Endothelial cell of umbilical vein (primary cell): ENCODE measurements at regions of chr20 and their contacts with region 1.

Region 1: DNA sequence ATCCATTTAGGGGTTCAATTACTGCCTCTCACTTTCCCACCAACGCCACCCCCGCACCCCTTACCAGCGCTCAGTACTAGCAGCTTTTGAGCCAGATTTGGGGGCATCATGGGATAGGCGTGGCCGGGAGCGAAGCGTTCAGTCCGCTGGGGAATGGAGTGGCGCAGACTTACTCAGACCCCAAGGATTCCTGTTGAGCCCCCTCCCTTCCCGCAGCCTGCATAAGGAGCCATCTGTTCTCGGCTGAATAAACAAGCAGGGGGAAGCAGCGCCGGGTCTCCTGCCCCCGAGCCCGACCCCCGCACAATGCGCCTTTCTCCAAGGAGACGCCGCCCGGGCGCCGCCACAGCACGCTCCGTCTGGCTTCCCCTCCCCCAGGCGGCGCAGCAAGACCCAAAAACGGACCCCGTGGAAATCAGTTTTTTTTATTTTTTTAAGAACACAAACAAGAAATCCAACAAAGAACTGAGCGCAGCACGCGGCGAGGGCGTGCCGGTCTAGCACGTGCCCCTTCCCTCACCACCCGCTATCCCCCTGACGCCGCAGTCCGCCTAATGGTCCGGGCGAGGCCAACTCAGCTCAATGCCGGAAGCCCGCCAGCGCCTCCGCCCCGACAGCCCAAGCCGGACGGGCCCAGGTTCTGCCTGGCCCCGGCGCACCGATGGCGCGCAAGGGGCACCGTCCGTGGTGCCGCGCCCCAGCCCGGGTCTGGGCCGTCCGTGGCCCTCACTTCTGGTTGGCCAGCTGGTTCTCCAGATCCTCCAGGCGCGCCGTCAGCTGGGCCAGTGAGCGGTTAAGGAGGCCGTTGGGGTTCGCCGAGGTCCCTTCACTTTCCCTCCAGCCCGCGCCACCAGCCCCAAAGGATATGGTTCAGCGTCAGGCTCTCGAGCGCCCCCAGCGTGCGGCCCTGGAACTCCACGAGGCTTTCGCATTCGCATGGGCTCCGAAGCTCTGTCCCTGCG is 13.3 kb upstream of the RBPJL start:
- DNase-seq: peak; percentile 76
- H3K4me3 ChIP-seq: peak overlapping the region; percentile 33 to 51 (median 47)
- H3K27ac ChIP-seq: peak overlapping the region; percentile 37
- H3K4me1 ChIP-seq: peaks cover 9% of the 10 kb centered on the region
- H3K27me3 ChIP-seq: peaks cover 0 to 8% of the 10 kb centered on the region in 2 experiments
- CTCF ChIP-seq: peak; percentile 95 to 99
- POLR2A ChIP-seq: no peak

Region 2: GRCh38 chr20:44885392-44886265 is 407.7 kb before region 1 on chr20 and contains the start of gene YWHAB:
- CTCF ChIA-PET with region 1: no interaction called
- POLR2A ChIA-PET with region 1: no interaction called
- dilution Hi-C with region 1: no loop called
- intact Hi-C with region 1: loop called (anchors 10 kb)
- DNase-seq: peak; percentile 98
- H3K4me3 ChIP-seq: peak within 1 kb of the TSS; percentile 89 to 98 (median 97)
- H3K27ac ChIP-seq: peak within 1 kb of the TSS; percentile 84
- H3K4me1 ChIP-seq: peaks cover 33% of the 10 kb centered on the region
- H3K27me3 ChIP-seq: no peaks in the 10 kb centered on the region
- CTCF ChIP-seq: no peak
- POLR2A ChIP-seq: peak; percentile 54
- total RNA-seq, gene YWHAB: 255 and 256 TPM in 2 replicates

Region 3: DNA sequence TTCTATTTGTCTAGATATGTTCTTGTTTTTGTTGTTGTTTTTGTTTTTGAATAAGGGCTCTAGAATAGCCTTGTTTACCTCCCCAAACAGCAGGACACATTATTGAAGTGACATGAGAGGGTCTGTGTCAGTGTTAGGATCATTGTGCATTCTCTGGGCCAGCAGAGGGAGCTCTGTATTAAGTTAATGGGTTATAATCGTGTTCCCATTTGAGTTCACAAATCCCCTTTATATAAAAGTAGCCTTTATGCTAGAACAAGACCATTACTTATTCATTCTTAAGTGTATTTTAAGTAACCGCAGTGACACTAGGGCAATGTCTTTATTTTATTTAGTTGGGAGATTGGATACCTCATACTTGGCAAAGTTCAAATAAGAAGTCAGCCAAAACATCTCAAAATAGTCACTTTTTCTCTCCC is 282.2 kb before region 1 on chr20:
- CTCF ChIA-PET with region 1: interaction called, 56 read pairs
- POLR2A ChIA-PET with region 1: no interaction called
- dilution Hi-C with region 1: no loop called
- intact Hi-C with region 1: loop called (anchors 1 kb)
- DNase-seq: peak; percentile 74
- H3K4me3 ChIP-seq: no peak overlapping the region
- H3K27ac ChIP-seq: no peak overlapping the region
- H3K4me1 ChIP-seq: no peaks in the 10 kb centered on the region
- H3K27me3 ChIP-seq: no peaks in the 10 kb centered on the region
- CTCF ChIP-seq: peak; percentile 67 to 68
- POLR2A ChIP-seq: no peak

Region 4: DNA sequence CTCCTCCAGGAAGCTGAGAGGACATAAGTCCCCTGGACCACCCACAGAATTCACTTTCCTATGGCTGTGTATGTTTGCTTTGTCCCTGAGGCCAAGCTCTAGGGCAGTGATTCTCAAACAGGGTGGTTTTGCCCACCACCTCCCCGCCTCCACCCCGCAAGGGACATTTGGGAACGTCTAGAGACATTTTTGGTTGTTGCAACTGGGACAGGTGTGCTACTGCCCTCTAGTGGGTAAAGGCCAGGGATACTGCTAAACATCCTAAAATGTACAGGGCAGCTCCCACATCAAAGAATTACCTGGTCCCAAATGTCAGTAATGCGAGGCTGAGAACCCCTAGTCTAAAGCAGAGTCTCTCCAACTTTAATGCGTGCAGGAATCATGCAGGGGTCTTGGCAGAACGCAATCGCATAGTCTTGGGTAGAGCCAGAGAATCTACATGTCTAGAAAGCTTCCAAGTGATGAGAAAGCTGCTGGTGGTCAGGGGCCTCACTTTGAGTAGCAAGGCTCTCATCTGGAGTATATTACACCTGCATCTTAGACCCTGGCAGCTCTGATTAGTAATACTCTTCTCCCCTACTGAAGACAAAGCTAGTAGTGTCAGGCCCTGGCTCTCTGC is 197.5 kb before region 1 on chr20:
- CTCF ChIA-PET with region 1: interaction called, 132 read pairs
- POLR2A ChIA-PET with region 1: no interaction called
- dilution Hi-C with region 1: no loop called
- intact Hi-C with region 1: loop called (anchors 1 kb)
- DNase-seq: peak; percentile 52
- H3K4me3 ChIP-seq: no peak overlapping the region
- H3K27ac ChIP-seq: no peak overlapping the region
- H3K4me1 ChIP-seq: peaks cover under 1% of the 10 kb centered on the region
- H3K27me3 ChIP-seq: peaks cover 23 to 30% of the 10 kb centered on the region in 2 experiments
- CTCF ChIP-seq: peak; percentile 53 to 79
- POLR2A ChIP-seq: no peak

Region 5: DNA sequence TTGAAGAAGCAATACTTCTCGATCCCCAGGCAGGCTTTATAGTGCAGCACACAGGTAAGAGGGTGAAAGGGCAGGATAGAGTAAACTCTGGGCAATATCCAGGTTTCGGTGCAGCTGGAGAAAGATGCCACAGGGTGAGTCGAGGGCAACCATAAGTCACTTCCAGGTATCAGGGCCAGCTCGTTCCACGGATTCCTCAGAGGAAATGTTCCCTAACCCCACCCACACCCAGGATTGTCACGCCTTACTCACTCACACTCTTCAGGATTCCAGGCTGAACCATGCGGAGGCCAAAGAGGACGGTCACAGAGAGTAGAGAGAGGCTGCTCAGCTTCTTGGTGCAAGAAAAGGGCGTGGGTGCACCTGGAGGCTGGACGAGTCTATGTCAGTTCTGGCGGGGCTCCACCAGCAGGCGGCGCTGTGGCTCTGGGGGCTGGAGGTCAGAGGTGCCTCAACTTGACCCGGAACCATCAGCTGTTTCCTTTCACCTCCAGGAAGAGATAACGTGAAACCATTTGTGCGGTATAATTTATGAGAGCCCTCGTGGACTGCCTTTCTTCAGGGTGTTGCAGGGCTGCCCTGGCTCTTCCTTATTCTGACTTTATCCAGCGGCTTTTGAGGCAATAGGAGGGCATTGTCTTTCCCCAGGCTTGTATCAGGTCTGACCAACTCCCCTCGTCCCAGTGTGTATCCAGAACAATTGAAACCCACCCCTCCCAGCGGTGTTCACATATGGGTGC is 154.6 kb before region 1 on chr20:
- CTCF ChIA-PET with region 1: interaction called, 25 read pairs
- POLR2A ChIA-PET with region 1: no interaction called
- dilution Hi-C with region 1: no loop called
- intact Hi-C with region 1: loop called (anchors 1 kb)
- DNase-seq: peak; percentile 4
- H3K4me3 ChIP-seq: no peak overlapping the region
- H3K27ac ChIP-seq: no peak overlapping the region
- H3K4me1 ChIP-seq: no peaks in the 10 kb centered on the region
- H3K27me3 ChIP-seq: peaks cover 11 to 12% of the 10 kb centered on the region in 2 experiments
- CTCF ChIP-seq: peak; percentile 69 to 70
- POLR2A ChIP-seq: no peak

Region 6: DNA sequence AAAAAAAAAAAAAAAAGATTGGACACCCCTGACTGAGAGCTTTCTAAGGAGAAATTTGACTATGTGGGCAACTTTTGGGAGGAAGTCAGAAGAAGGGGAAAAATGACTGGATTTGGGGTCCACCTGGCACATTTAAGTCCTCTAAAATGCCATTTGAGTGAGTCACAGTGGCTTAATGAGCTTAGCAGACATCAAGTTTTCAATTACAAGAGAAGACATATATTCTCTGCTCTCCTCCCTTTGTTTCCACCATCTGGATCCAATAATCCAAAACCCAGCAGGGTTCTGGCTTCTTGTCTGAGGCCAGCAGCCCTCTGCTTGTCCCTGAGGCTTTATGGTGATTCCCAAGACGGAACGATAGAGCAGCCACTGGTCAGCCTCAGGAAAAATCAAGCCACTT is 111.7 kb before region 1 on chr20:
- CTCF ChIA-PET with region 1: no interaction called
- POLR2A ChIA-PET with region 1: no interaction called
- dilution Hi-C with region 1: no loop called
- intact Hi-C with region 1: no loop called
- DNase-seq: no peak
- H3K4me3 ChIP-seq: no peak overlapping the region
- H3K27ac ChIP-seq: no peak overlapping the region
- H3K4me1 ChIP-seq: no peaks in the 10 kb centered on the region
- H3K27me3 ChIP-seq: peaks cover 0 to 2% of the 10 kb centered on the region in 2 experiments
- CTCF ChIP-seq: no peak
- POLR2A ChIP-seq: no peak

Region 7: DNA sequence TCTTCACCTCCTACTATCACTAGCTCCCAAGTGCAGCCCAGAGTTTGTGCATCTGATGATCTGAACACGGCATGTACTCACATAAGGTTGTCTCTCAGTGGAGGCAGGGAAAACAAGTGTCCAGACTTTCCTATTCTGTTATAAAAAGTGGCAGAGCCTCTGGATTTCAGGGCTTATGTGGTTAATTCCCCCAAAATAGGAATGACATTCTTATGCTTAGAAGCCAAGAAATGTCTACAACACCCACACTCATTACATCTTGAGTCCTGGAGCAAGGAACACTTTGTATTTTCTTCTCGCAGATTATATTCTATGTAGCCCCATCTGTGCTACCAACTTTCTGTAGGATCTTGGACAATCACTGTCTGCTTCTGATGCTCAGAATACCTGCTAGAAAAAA is 100.0 kb before region 1 on chr20:
- CTCF ChIA-PET with region 1: no interaction called
- POLR2A ChIA-PET with region 1: no interaction called
- dilution Hi-C with region 1: no loop called
- intact Hi-C with region 1: no loop called
- DNase-seq: no peak
- H3K4me3 ChIP-seq: no peak overlapping the region
- H3K27ac ChIP-seq: no peak overlapping the region
- H3K4me1 ChIP-seq: no peaks in the 10 kb centered on the region
- H3K27me3 ChIP-seq: peaks cover 2 to 8% of the 10 kb centered on the region in 2 experiments
- CTCF ChIP-seq: no peak
- POLR2A ChIP-seq: no peak

Region 8: GRCh38 chr20:45246109-45246508 is 47.2 kb before region 1 on chr20:
- CTCF ChIA-PET with region 1: no interaction called
- POLR2A ChIA-PET with region 1: no interaction called
- dilution Hi-C with region 1: no loop called
- intact Hi-C with region 1: no loop called
- DNase-seq: no peak
- H3K4me3 ChIP-seq: no peak overlapping the region
- H3K27ac ChIP-seq: no peak overlapping the region
- H3K4me1 ChIP-seq: no peaks in the 10 kb centered on the region
- H3K27me3 ChIP-seq: peaks cover 11 to 21% of the 10 kb centered on the region in 2 experiments
- CTCF ChIP-seq: no peak
- POLR2A ChIP-seq: no peak

Region 9: DNA sequence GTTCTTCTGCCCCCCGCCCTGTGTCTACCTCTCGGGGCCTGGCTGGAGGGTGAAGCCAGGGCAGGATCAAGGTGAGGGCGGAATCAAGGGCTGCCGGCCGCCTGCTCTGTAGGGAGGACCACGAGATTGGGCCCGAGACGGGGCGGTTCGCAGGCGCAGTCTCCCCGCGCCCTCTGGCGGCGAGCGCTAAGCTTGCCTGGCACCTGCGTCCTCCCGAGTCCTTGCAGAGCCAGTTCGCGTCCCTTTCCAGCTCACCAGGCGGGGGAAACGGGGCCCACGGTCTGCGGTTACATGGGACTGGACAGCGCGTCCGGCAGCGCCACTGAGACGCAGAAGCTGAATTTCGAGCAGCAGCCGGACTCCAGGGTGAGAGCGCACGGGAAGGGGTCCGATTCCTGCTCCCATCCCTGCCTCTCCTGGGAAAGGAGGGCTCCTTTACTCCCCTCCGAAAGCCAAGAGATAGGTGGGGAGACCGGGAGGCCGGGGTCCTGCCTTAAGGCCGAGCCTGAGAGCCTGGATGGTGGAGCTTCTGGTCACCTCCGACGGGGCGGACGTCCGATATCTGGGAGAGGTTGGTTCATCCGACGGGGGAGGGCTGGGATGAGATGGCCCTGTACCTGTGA is 18.4 kb after region 1 on chr20:
- CTCF ChIA-PET with region 1: interaction called, 57 read pairs
- POLR2A ChIA-PET with region 1: no interaction called
- dilution Hi-C with region 1: no loop called
- intact Hi-C with region 1: no loop called
- DNase-seq: peak; percentile 37
- H3K4me3 ChIP-seq: no peak overlapping the region
- H3K27ac ChIP-seq: no peak overlapping the region
- H3K4me1 ChIP-seq: no peaks in the 10 kb centered on the region
- H3K27me3 ChIP-seq: peaks cover 18 to 21% of the 10 kb centered on the region in 2 experiments
- CTCF ChIP-seq: peak; percentile 84 to 97
- POLR2A ChIP-seq: no peak

Region 10: GRCh38 chr20:45450097-45450818 is 156.9 kb after region 1 on chr20:
- CTCF ChIA-PET with region 1: interaction called, 11 read pairs
- POLR2A ChIA-PET with region 1: no interaction called
- dilution Hi-C with region 1: no loop called
- intact Hi-C with region 1: no loop called
- DNase-seq: peak; percentile 54
- H3K4me3 ChIP-seq: no peak overlapping the region
- H3K27ac ChIP-seq: no peak overlapping the region
- H3K4me1 ChIP-seq: no peaks in the 10 kb centered on the region
- H3K27me3 ChIP-seq: peaks cover 0 to 3% of the 10 kb centered on the region in 2 experiments
- CTCF ChIP-seq: peak; percentile 48 to 56
- POLR2A ChIP-seq: no peak

Region 11: DNA sequence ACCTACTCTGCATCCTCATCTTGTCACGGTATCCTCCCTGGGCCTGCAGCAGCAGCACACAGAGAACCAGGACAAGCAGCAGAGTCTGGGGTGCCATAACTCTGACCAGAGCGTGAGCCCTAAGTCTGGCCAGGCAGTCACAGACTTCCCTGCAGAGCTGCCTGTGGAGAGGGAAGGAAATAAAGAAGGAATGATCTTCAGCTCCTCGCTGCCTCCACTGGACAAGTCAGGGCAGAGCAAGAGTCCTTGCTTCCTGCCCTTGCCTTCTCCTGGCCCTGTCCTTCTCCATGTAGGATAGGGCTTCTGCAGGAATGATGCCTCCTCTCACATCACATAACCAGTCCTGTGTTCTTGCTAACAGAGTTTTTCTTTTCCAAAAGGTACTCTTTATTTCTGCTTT is 392.6 kb after region 1 on chr20:
- CTCF ChIA-PET with region 1: no interaction called
- POLR2A ChIA-PET with region 1: no interaction called
- dilution Hi-C with region 1: no loop called
- intact Hi-C with region 1: no loop called
- DNase-seq: no peak
- H3K4me3 ChIP-seq: no peak overlapping the region
- H3K27ac ChIP-seq: no peak overlapping the region
- H3K4me1 ChIP-seq: no peaks in the 10 kb centered on the region
- H3K27me3 ChIP-seq: no peaks in the 10 kb centered on the region
- CTCF ChIP-seq: peak in 1 of 2 donors; percentile 7
- POLR2A ChIP-seq: no peak